Activated CD4-positive, alpha-beta T cell treated with anti-CD3 and anti-CD28 coated beads, Interleukin-2, amount 10 ng/mL, durations not matched to agents 24 days and 14 days (primary cell): ENCODE measurements at regions of chr15 and their contacts with region 1.

Region 1: GRCh38 chr15:68383161-68384074 is 48.5 kb downstream of the ITGA11 start:
- DNase-seq: peak; percentile 88
- H3K4me3 Mint-ChIP-seq: no peak overlapping the region
- H3K27ac Mint-ChIP-seq: no peak overlapping the region
- H3K4me1 Mint-ChIP-seq: peaks cover 25% of the 10 kb centered on the region
- H3K27me3 Mint-ChIP-seq: peaks cover 3% of the 10 kb centered on the region

Region 2: DNA sequence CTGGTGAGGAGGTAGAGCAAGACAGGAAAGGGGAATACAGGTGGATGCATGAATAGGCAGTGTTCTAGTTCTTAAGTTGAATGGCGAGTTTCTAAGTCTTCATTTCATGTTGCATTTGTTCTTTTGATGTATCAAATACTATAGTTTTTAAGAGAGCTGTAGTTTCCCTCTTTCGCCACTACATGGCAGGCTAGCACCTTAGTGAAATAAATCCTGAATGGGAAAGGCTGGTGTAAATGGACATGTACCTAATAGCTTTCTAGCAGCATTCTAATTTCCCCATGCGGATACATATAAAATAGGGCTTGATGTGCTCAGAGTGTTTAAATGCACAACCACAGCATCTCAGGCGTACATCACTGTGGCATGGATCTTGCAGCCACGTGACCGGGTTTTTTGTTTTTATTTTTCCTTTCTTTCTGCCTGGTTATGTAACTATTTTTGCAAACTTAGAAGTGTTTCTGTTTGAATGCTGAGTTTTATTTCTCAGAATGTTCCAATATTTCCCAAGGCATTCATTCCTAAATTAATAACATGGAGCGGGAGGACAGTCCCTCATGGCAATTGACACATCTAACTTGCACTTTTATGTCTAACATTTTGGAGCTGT is 130.4 kb before region 1 on chr15:
- intact Hi-C with region 1: loop called (anchors 1 kb)
- DNase-seq: peak; percentile 84
- H3K4me3 Mint-ChIP-seq: no peak overlapping the region
- H3K27ac Mint-ChIP-seq: no peak overlapping the region
- H3K4me1 Mint-ChIP-seq: peaks cover 8% of the 10 kb centered on the region
- H3K27me3 Mint-ChIP-seq: peaks cover 31% of the 10 kb centered on the region

Region 3: DNA sequence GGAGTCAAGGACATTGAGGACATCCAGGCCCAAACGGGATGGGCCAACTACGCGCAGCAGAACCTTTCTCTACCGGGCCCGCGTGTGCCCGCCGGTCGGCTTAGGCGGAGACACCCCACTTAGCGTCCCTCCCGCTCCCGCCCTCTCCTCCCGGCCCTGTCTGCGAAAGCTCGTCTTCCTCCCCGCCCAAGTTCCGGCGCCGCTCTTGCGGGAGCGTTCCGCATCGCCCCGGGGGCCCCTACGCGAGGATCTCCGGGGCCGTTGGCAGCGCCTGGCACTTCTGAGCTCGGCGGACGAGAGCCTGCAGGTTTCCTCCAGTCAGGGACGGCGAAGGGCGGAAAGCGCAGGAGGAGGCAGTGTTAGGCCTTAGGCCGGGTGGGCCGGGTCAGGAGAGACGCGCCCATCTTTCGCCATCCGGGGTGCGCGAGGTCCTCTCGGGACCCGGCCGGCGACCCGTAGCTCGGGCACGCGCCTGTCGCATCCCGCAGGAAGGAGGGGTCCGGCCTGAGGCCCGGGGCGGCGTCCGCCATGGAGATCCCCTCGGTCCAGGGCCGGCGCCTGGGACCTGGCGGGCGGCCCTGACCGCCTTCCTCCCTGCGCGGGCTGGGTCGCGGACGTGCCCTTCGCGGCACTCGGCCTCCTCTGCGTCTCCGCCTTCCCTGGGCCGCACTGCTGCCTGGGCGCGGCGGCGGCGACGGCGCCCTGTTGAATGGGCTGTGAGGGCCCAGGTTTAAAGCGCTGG is 105.6 kb before region 1 on chr15 and contains the start of gene FEM1B:
- intact Hi-C with region 1: no loop called
- DNase-seq: peak; percentile 96
- H3K4me3 Mint-ChIP-seq: peak within 1 kb of the TSS; percentile 95
- H3K27ac Mint-ChIP-seq: peak within 1 kb of the TSS; percentile 96
- H3K4me1 Mint-ChIP-seq: peaks cover 48% of the 10 kb centered on the region
- H3K27me3 Mint-ChIP-seq: no peaks in the 10 kb centered on the region
- total RNA-seq, gene FEM1B: 46.2 and 51.6 TPM in 2 replicates

Region 4: DNA sequence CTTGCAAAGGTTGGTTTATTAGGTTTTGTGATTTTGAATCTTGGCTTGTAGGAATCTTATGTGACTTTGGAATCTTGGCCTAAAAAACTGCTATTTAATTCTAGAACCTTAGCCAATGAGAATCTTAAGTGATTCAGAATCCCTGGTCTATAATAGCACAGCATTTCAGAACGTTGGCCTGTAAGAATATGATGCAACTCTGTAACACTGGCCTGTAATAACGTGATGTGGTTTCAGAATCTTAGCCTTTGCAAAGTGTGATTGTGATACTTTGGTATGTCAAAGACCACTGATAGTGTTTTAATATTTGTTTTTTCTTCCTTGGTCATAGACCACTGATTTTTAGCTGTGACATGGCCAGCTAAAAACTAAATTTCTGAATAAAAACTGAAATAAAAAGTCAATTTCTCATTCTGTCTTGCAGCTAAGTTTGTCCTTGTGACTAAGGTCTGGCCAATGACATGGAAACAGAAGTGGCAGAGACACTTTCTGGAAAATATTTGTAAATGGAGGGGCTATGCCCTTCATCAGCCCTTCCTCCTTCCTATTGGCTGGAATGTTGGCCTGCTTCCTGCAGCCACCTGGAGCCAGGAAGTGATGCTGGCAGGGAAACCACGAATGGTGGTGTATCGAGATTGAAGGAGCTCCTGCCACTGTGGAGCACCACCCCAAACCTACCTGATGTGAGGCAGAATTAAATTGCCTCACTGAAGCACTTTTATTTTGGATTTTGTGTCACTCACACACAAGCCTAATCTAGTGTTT is 153.1 kb after region 1 on chr15:
- intact Hi-C with region 1: no loop called
- DNase-seq: no peak
- H3K4me3 Mint-ChIP-seq: no peak overlapping the region
- H3K27ac Mint-ChIP-seq: no peak overlapping the region
- H3K4me1 Mint-ChIP-seq: no peaks in the 10 kb centered on the region
- H3K27me3 Mint-ChIP-seq: peaks cover 29% of the 10 kb centered on the region